Activated CD4-positive, alpha-beta T cell treated with anti-CD3 and anti-CD28 coated beads for 36 hours (primary cell): ENCODE measurements at regions of chr5 and their contacts with region 1.

Region 1: GRCh38 chr5:142108432-142109330 is at the start of gene NDFIP1:
- DNase-seq: peak; percentile 93
- ATAC-seq: peak; percentile 86
- H3K4me3 Mint-ChIP-seq: peak within 1 kb of the TSS; percentile 95
- H3K27ac Mint-ChIP-seq: peak within 1 kb of the TSS; percentile 99
- H3K4me1 Mint-ChIP-seq: peaks cover 67% of the 10 kb centered on the region
- H3K27me3 Mint-ChIP-seq: no peaks in the 10 kb centered on the region
- total RNA-seq, gene NDFIP1: 54.9 to 86.7 TPM

Region 2: DNA sequence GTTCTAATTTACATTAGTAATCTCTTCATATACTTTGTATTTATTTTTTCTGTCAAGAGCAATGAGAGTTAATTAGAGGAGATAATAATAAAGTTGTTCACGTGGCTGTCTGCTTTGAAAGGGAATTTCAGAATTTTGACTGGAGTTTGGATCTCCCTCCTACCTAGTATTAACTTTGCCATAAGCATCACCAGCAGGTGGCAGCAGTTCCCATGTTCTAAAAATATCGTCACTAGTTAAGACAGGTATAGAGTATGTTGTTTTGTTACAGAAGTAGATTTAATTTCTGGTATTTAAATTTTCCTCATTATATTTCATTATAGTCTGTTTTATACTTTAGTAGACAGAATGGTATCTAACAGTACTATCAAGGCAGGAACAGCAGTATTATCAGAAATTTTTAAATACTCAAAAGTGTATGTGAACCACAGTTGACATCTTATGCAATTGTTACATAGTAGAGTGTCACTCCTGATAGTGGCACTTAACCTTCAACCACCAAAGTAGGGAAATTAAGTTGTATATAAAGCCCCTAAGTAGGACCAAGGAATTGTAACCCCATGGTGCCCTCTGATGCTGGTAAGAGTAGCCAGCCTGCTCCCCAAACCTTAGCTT is 116.2 kb before region 1 on chr5:
- CTCF ChIA-PET with region 1: interaction called, 11 read pairs
- POLR2A ChIA-PET with region 1: no interaction called
- intact Hi-C with region 1: no loop called
- DNase-seq: peak; percentile 89
- ATAC-seq: peak; percentile 88
- H3K4me3 Mint-ChIP-seq: no peak overlapping the region
- H3K27ac Mint-ChIP-seq: peak overlapping the region; percentile 19
- H3K4me1 Mint-ChIP-seq: no peaks in the 10 kb centered on the region
- H3K27me3 Mint-ChIP-seq: no peaks in the 10 kb centered on the region

Region 3: GRCh38 chr5:142006363-142007236 is 102.1 kb before region 1 on chr5:
- CTCF ChIA-PET with region 1: interaction called, 29 read pairs
- POLR2A ChIA-PET with region 1: interaction called, 7 read pairs
- intact Hi-C with region 1: loop called in 1 of 2 experiments (anchors 1 kb)
- DNase-seq: peak; percentile 85
- ATAC-seq: peak; percentile 90
- H3K4me3 Mint-ChIP-seq: peak overlapping the region; percentile 31
- H3K27ac Mint-ChIP-seq: peak overlapping the region; percentile 89
- H3K4me1 Mint-ChIP-seq: peaks cover 70% of the 10 kb centered on the region
- H3K27me3 Mint-ChIP-seq: no peaks in the 10 kb centered on the region

Region 4: DNA sequence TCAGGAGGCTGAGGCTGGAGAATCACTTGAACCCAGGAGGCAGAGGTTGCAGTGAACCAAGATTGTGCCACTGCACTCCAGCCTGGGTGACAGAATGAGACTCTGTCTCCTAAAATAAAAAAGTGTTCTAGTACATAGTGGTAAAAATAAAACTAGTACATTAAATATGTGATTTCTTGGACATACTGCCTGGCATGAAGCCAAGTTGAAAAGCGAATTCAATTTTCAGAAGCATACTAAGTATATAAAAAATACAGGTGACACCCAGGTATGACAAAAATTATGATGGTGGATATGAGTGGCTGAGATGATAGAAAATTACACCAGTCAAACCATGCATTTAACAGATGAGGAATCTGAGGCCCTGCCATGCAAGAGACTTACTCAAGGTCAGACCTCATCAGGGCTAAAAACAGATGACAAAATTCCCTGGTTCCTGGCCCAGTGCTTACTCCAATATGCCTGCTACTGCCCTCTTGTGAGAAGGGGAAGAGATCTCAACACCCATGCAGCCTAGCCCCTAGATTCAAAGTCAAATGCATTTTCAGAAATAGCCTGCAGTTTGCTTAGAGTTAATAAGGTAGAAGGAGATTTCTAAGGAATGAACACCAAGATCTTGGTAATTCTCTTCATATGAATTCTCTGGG is 49.3 kb before region 1 on chr5:
- CTCF ChIA-PET with region 1: no interaction called
- POLR2A ChIA-PET with region 1: no interaction called
- intact Hi-C with region 1: no loop called
- DNase-seq: no peak
- ATAC-seq: no peak
- H3K4me3 Mint-ChIP-seq: no peak overlapping the region
- H3K27ac Mint-ChIP-seq: no peak overlapping the region
- H3K4me1 Mint-ChIP-seq: peaks cover 22% of the 10 kb centered on the region
- H3K27me3 Mint-ChIP-seq: no peaks in the 10 kb centered on the region

Region 5: GRCh38 chr5:142095651-142096330 is 12.9 kb before region 1 on chr5:
- CTCF ChIA-PET with region 1: interaction called, 22 read pairs
- POLR2A ChIA-PET with region 1: interaction called, 38 read pairs
- intact Hi-C with region 1: loop called (anchors 1 kb)
- DNase-seq: peak; percentile 93
- ATAC-seq: peak; percentile 91
- H3K4me3 Mint-ChIP-seq: peak overlapping the region; percentile 53
- H3K27ac Mint-ChIP-seq: peak overlapping the region; percentile 97
- H3K4me1 Mint-ChIP-seq: peaks cover 77% of the 10 kb centered on the region
- H3K27me3 Mint-ChIP-seq: no peaks in the 10 kb centered on the region

Region 6: DNA sequence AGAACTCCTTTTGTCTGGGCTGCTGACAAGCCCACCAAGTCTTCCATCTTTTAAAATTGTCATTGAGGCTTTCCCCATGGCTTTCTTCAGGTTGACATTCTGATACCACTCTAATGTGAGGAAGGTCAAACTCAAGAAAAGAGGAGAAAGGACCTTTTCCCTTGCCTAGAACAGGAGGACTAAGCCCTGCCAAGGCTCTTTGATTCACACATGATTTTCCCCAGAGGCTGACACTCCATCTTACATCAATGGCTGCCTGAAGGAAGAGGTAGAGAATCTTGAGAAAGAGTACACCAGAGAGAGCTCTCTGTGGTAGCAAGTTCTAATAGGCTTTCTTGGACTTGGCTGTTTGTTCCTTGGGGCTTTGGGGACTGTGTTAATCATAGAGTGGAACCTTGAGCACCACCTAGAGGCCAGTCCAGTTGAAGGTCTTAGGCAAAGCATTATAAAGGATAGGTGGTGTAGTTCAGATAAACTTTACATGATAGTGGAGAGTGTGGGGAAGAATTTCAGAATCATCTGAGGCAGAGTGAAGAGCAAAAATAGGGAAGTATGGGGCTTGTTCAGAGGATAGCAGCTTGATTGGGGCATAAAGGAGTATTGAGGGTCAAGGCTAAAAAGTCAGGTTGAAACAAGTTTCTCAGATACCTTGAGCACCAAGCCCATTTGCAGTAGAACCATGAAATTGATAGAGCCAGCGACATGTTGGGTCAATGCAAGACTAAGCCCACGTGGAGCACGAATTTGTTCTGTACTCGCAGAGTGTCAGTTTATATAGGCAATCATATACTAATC is 36.6 kb after region 1 on chr5:
- CTCF ChIA-PET with region 1: interaction called, 10 read pairs
- POLR2A ChIA-PET with region 1: no interaction called
- intact Hi-C with region 1: loop called in 1 of 2 experiments (anchors 5 kb)
- DNase-seq: peak; percentile 78
- ATAC-seq: peak; percentile 93
- H3K4me3 Mint-ChIP-seq: no peak overlapping the region
- H3K27ac Mint-ChIP-seq: no peak overlapping the region
- H3K4me1 Mint-ChIP-seq: peaks cover 7% of the 10 kb centered on the region
- H3K27me3 Mint-ChIP-seq: no peaks in the 10 kb centered on the region

Region 7: DNA sequence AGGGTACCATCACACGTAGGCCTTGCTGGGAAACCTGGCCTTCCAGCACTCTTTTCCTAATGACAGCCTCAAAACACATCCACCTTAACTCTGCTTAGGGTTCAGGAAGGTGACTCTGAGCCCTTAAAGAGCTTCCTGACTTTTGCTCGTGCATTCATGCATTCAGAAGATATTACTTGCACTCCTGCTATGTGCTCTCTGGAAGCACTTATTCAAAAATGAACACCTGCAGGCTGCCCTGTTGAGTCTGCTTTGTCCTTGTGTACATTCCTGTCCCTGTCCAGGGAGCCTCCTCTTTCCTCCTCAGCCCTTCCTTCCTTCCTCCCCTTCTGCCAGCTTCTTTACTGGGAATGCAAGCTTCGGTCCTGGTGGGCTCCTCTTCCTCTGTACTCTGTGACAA is 154.7 kb after region 1 on chr5:
- CTCF ChIA-PET with region 1: no interaction called
- POLR2A ChIA-PET with region 1: no interaction called
- intact Hi-C with region 1: no loop called
- DNase-seq: no peak
- ATAC-seq: no peak
- H3K4me3 Mint-ChIP-seq: no peak overlapping the region
- H3K27ac Mint-ChIP-seq: no peak overlapping the region
- H3K4me1 Mint-ChIP-seq: no peaks in the 10 kb centered on the region
- H3K27me3 Mint-ChIP-seq: no peaks in the 10 kb centered on the region

Region 8: GRCh38 chr5:142356716-142357473 is 248.2 kb after region 1 on chr5:
- CTCF ChIA-PET with region 1: no interaction called
- POLR2A ChIA-PET with region 1: no interaction called
- intact Hi-C with region 1: loop called in 1 of 2 experiments (anchors 5 kb)
- DNase-seq: peak; percentile 94
- ATAC-seq: peak; percentile 85
- H3K4me3 Mint-ChIP-seq: peak overlapping the region; percentile 70
- H3K27ac Mint-ChIP-seq: peak overlapping the region; percentile 96
- H3K4me1 Mint-ChIP-seq: peaks cover 49% of the 10 kb centered on the region
- H3K27me3 Mint-ChIP-seq: no peaks in the 10 kb centered on the region

Region 9: DNA sequence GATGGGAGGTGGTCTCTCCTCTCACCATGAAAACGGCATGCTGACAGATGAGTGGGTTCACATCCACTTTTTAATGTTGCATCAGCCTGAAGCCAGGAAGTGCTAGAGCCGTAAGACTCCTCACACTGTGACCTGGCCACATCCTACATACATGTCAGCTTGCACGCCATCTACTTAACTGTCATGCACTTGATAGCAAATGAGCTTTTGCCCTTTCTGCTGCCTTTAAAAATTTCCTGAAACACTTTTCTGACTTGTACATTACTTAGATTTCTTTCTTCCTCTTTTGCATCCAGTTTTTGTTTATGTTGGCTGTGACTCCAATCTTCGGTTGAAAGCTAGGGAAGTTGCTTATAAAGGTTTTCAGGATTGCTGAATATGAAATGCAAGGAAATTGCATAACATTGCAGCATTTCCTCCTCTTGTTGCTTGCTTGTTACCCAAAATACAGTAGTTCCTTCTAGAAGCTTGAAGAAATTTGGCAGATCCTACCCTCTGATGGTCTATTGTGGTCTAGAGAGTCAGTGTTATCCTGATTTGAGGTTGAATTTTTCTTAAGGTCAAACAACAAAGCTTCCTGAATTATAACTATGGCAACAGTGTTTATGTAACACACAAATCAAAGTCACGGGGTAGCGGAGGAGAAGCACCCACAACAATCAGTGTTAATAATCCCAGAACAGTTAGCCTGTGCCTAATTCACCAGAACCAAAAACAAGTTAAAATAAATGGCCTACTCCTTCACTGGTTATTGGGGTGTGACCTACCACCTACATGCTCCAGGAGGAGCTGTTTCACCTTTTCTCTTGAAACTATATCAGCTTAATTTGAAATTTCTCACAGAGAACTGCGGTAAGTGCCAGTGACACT is 894.0 kb after region 1 on chr5:
- CTCF ChIA-PET with region 1: no interaction called
- POLR2A ChIA-PET with region 1: no interaction called
- intact Hi-C with region 1: loop called in 1 of 2 experiments (anchors 10 kb)
- DNase-seq: peak; percentile 78
- ATAC-seq: peak; percentile 92
- H3K4me3 Mint-ChIP-seq: peak overlapping the region; percentile 17
- H3K27ac Mint-ChIP-seq: peak overlapping the region; percentile 93
- H3K4me1 Mint-ChIP-seq: peaks cover 50% of the 10 kb centered on the region
- H3K27me3 Mint-ChIP-seq: no peaks in the 10 kb centered on the region